ENCODE measurements at regions of chr3 and their contacts with region 1.

Region 1: DNA sequence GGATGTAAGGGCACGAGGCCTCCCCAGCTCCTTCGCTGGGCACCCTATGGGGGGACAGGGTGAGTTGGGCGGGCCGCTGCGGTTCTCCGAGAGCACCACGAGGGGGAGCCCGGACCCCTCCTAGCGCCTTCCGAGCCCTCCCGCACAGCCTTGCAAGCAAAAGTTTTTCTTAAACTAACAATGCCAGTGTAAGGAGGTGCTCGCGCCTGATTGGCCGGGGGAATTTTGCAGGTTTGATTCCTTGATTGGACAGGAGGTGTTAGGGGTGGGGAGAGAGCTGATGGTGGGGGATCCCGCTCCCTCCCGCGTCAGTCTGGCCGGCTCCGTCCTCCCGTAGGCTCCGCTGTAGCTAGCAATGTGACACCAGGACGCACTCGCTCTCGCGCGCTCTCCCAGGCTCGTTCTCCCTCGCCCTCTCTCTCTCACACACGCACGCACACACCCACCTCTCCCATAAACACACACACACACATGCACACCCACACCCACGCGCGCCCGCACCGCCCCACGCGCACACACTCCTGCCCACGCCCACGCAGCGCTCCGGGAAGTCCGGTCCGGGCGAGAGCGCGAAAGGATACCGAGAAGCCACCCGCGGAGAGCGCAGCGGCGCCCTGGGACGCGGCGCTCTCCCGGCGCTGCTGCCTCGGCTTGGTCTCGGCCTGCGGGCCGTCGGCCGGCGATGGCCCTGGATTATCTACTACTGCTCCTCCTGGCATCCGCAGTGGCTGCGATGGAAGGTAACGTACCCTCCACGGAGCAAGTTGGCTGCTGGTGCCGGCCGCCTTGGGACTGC is at the start of gene EPHB1:
- DNase-seq: peak; percentile 76
- H3K4me3 Mint-ChIP-seq: peak within 1 kb of the TSS; percentile 67
- H3K27ac Mint-ChIP-seq: no peak within 1 kb of the TSS
- H3K4me1 Mint-ChIP-seq: peaks cover 9% of the 10 kb centered on the region
- H3K27me3 Mint-ChIP-seq: peaks cover 47% of the 10 kb centered on the region
- total RNA-seq, gene EPHB1: 0.32 TPM in 1 of 2 experiments, not detected in the other

Region 2: GRCh38 chr3:134838599-134838998 is 43.5 kb after region 1 on chr3:
- CTCF ChIA-PET with region 1: interaction called, 7 read pairs
- intact Hi-C with region 1: loop called (anchors 1 kb)
- DNase-seq: peak; percentile 9
- H3K4me3 Mint-ChIP-seq: no peak overlapping the region
- H3K27ac Mint-ChIP-seq: no peak overlapping the region
- H3K4me1 Mint-ChIP-seq: no peaks in the 10 kb centered on the region
- H3K27me3 Mint-ChIP-seq: peaks cover 5% of the 10 kb centered on the region

Region 3: GRCh38 chr3:135240426-135240825 is 445.3 kb after region 1 on chr3:
- CTCF ChIA-PET with region 1: no interaction called
- intact Hi-C with region 1: loop called (anchors 1 kb)
- DNase-seq: no peak
- H3K4me3 Mint-ChIP-seq: no peak overlapping the region
- H3K27ac Mint-ChIP-seq: no peak overlapping the region
- H3K4me1 Mint-ChIP-seq: no peaks in the 10 kb centered on the region
- H3K27me3 Mint-ChIP-seq: peaks cover 3% of the 10 kb centered on the region

Region 4: DNA sequence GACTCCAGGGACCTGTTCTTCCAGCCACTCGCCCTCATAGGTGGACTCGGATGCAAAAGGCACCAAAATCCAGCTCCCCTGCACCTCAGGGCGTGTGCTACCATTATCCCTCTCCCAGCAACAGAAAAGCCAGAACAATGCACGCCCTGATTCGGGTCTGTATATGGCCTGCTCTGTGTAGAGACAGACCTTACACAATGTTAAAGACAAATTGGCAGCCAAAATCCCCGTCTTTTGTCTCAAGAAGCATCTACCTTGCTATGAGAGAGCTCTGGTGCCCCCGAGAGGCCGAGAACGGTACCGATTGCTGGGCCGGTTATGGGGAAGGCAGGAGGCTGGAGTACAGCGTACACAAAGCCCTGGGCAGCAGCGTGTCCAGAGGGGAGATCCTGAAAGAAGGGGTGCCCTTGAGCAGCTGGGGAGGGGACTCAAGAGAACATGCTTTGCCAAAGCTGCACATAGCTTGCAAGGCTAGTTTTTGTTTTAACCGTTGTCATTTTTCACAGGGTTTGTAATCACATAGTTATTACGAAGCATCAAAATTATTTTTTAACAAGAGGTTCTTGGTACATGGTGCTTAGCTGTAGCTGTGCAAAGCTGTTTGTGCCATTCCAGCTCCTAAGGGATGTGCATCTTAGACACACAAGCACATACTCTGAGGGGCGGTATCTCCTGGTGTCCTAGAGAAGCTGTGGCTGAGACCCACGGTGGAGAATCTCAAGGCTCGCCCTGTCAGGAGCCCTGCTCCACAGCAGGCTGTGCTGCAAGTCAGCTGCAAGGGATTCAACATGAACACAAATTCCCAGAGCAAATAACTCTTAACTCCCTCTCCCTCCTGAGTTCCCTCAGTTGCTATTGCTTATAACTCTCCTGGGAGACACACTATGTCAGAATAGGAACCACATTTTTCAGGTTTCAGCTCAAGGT is 708.9 kb after region 1 on chr3:
- CTCF ChIA-PET with region 1: interaction called, 3 read pairs
- intact Hi-C with region 1: loop called (anchors 2 kb)
- DNase-seq: peak; percentile 53
- H3K4me3 Mint-ChIP-seq: no peak overlapping the region
- H3K27ac Mint-ChIP-seq: no peak overlapping the region
- H3K4me1 Mint-ChIP-seq: no peaks in the 10 kb centered on the region
- H3K27me3 Mint-ChIP-seq: peaks cover 4% of the 10 kb centered on the region

Region 5: DNA sequence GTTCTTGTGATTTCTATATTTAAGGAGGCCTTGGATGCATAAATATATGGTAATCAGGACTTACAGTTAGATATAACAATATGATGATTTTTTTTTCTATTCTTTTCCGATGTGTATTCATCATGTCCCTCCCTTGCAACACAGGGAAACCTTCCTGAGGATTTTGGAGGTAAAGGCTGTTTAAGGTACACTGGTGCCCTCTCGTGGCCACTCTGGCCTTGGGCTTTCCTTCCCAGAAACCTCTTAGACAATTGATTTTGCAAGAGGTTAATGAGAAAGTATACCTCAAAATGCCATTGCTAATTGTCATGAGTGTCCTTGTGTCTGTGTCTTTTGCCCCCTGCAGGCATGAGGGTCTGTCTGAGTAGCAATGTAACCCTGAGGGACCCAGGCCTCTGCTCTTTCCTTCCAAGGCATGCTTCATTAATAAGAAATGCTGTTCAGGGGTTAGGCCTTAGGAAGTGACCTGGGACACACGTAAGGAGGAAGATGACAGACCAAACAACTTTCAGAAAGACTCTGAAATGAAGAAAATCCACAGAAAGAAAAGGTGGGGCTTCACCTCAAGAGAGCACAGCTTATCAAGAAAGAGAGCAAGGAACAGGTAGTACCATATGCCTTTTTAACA is 1100.1 kb after region 1 on chr3:
- CTCF ChIA-PET with region 1: no interaction called
- intact Hi-C with region 1: loop called (anchors 1 kb)
- DNase-seq: peak; percentile 69
- H3K4me3 Mint-ChIP-seq: no peak overlapping the region
- H3K27ac Mint-ChIP-seq: no peak overlapping the region
- H3K4me1 Mint-ChIP-seq: no peaks in the 10 kb centered on the region
- H3K27me3 Mint-ChIP-seq: peaks cover 3% of the 10 kb centered on the region